ENCODE measurements at regions of chr22 and their contacts with region 1.

Region 1: GRCh38 chr22:19387038-19387437 is 44.5 kb downstream of the HIRA start:
- DNase-seq: no peak
- ATAC-seq: no peak
- H3K4me3 ChIP-seq: no peak overlapping the region
- H3K27ac ChIP-seq: no peak overlapping the region
- H3K4me1 ChIP-seq: no peaks in the 10 kb centered on the region
- H3K27me3 ChIP-seq: no peaks in the 10 kb centered on the region
- CTCF ChIP-seq: no peak
- EP300 ChIP-seq: no peak
- POLR2A ChIP-seq: no peak
- RAD21 ChIP-seq: 0 out of 4 replicates have a peak, but pooled peaks of 1 of the 2 experiments have one; percentile 3

Region 2: DNA sequence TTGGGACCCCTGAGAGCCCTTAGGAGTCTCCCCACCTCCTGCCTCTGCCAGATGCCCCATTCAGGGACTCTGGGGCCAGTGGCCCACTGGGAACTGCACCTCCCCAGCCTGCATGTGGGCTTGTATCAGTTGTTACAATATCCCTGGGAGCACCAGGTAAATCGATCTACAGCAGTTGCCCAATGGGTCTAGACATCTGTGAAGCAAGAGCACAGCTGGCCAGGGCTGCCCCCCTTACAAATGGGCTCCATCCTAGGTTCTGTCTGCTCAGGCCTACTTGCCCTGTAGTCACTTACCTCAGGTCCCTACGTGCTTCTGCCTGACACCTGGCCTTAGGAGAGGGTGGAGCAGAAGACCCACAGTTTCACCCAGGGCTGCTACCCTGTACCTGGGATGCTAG is 18.2 kb before region 1 on chr22:
- CTCF ChIA-PET with region 1: interaction called, 3 read pairs
- POLR2A ChIA-PET with region 1: interaction called, 24 read pairs
- in situ Hi-C with region 1: no loop called
- intact Hi-C with region 1: no loop called
- DNase-seq: no peak
- ATAC-seq: no peak; the same call in 1 of the 3 replicates
- H3K4me3 ChIP-seq: no peak overlapping the region
- H3K27ac ChIP-seq: no peak overlapping the region
- H3K4me1 ChIP-seq: no peaks in the 10 kb centered on the region
- H3K27me3 ChIP-seq: no peaks in the 10 kb centered on the region
- CTCF ChIP-seq: no peak
- EP300 ChIP-seq: no peak
- POLR2A ChIP-seq: no peak
- RAD21 ChIP-seq: no peak

Region 3: DNA sequence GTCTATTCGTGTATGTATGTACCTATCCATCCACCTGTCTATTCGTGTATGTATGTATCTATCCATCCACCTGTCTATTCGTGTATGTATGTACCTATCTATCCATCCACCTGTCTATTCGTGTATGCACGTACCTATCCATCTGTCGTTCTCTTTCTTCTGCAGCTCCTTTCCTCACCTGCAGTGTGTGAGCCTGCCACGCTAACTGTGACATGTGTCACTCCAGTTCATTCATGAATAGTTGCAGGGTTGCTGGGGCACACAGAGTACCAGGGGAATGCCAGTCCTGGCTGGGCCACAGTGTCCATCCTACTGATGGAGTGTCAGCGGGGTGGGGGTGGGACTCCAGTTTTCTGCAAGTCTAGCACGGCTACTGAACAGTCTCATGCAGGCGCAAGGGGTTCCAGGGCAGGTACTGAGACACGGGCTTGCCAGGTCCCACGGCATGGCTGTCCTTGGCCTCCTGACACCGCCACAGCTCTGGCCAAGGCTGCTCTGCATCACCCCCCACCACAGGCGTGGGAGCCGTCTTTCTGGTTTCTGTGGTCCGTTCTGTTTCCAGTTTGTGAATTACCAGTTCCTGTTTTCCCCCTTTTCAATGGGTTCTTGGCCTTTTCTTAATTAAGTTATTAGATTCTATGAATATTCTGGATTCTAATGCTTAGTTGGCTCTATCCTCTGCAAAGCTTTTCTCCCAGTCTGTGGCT is 226.0 kb after region 1 on chr22:
- CTCF ChIA-PET with region 1: no interaction called
- POLR2A ChIA-PET with region 1: no interaction called
- in situ Hi-C with region 1: no loop called
- intact Hi-C with region 1: no loop called
- DNase-seq: no peak
- ATAC-seq: 0 out of 3 replicates have a peak, but pooled peaks have one; percentile 10
- H3K4me3 ChIP-seq: no peak overlapping the region
- H3K27ac ChIP-seq: no peak overlapping the region
- H3K4me1 ChIP-seq: peaks cover 0 to 18% of the 10 kb centered on the region in 2 experiments; a peak in 3 of 5 replicates
- H3K27me3 ChIP-seq: peaks cover 81 to 87% of the 10 kb centered on the region in 2 experiments
- CTCF ChIP-seq: no peak
- EP300 ChIP-seq: no peak
- POLR2A ChIP-seq: no peak
- RAD21 ChIP-seq: no peak